ENCODE measurements at regions of chr20 and their contacts with region 1.

Region 1: DNA sequence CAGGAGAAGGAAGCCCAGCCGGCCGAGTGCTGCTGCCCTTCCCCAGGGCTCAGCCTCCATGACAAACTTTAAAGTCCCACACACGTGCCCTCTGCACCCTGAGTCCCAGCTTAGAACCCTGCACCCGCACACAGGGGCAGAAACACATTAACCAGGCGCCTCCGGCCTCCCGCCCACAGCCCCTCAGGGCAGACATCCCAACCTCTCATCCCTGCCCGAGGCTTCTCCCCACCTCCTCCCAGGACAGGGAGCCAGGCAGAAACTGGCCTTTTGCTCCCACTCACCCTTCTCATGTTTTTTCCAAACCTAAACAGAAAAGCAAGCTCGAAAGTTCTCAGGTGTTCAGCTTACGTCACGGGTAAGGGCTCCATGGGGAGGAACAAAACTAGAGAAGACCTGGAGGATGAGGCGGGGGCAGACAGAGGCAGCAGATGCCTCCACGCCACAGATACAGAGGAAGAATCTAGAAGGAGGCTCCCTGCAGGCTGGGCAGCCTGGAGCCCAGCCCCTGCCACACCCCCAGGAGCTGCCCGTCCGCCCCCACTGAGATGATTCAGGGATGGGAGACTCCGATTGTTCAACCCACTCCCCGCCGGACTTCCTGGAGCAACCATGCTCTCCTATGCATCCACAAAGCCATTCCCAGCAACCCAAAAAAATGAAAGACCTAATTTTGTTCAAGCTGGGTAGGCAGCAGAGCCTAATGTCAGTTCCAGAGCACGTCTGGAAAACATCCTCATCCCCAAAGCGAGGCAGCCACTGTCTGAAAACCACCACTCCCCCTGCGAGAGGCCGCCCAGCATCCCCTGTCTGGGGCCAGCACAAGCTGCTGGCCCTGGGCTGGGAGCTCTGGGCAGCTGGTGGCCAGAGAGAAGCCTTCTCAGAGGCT is 8.8 kb downstream of the KCNQ2 start:
- DNase-seq: peak; percentile 88
- H3K4me3 ChIP-seq: no peak overlapping the region; a peak in 1 of 4 replicates
- H3K27ac ChIP-seq: peak overlapping the region in 1 of 2 experiments; percentile 97; a peak in 2 of 4 replicates
- H3K4me1 ChIP-seq: peaks cover 0 to 95% of the 10 kb centered on the region in 2 experiments; a peak in 2 of 4 replicates
- H3K27me3 ChIP-seq: peaks cover 17% of the 10 kb centered on the region
- CTCF ChIP-seq: no peak
- EP300 ChIP-seq: peak in 1 of 2 experiments; percentile 48; a peak in 1 of 4 replicates
- RAD21 ChIP-seq: no peak; the same call in 1 of the 2 replicates

Region 2: GRCh38 chr20:62914970-62915457 is 548.6 kb before region 1 on chr20:
- CTCF ChIA-PET with region 1: no interaction called
- POLR2A ChIA-PET with region 1: no interaction called
- DNase-seq: peak; percentile 49
- H3K4me3 ChIP-seq: no peak overlapping the region
- H3K27ac ChIP-seq: no peak overlapping the region
- H3K4me1 ChIP-seq: peaks cover 0 to 13% of the 10 kb centered on the region in 2 experiments; a peak in 2 of 4 replicates
- H3K27me3 ChIP-seq: no peaks in the 10 kb centered on the region
- CTCF ChIP-seq: no peak
- EP300 ChIP-seq: no peak
- RAD21 ChIP-seq: no peak

Region 3: DNA sequence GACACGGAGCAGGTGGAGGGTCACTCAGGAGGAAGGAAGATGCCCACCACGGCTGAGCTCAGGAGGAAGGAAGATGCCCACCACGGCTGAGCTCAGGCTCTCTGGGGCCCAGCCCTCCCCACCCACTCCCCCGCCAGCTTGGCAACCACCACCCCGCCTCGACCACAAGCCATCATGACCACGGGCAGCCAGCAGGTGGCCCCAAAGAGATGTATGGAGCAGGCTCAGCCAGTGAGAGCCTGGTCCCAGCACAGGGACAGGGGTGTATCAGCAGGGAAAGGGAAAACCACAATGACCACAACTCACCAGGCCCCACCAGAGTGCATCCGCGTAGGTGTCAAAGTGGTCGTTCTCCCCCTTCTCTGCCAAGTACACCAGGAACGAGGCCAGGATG is 21.5 kb before region 1 on chr20:
- CTCF ChIA-PET with region 1: interaction called, 14 read pairs
- POLR2A ChIA-PET with region 1: interaction called, 3 read pairs
- DNase-seq: peak; percentile 86
- H3K4me3 ChIP-seq: no peak overlapping the region
- H3K27ac ChIP-seq: peak overlapping the region in 1 of 2 experiments; percentile 62; a peak in 1 of 4 replicates
- H3K4me1 ChIP-seq: peaks cover 0 to 32% of the 10 kb centered on the region in 2 experiments; a peak in 1 of 4 replicates
- H3K27me3 ChIP-seq: no peaks in the 10 kb centered on the region
- CTCF ChIP-seq: peak; percentile 32
- EP300 ChIP-seq: no peak
- RAD21 ChIP-seq: peak; percentile 71

Measured in SK-N-SH (cell line).